Cardiac septum (tissue), 1 donor: ENCODE measurements at regions of chr17 and their contacts with region 1.

Region 1: GRCh38 chr17:44344939-44345453 is at the start of gene GRN:
- DNase-seq: peak; percentile 96
- total RNA-seq, gene GRN: 130 TPM

Region 2: DNA sequence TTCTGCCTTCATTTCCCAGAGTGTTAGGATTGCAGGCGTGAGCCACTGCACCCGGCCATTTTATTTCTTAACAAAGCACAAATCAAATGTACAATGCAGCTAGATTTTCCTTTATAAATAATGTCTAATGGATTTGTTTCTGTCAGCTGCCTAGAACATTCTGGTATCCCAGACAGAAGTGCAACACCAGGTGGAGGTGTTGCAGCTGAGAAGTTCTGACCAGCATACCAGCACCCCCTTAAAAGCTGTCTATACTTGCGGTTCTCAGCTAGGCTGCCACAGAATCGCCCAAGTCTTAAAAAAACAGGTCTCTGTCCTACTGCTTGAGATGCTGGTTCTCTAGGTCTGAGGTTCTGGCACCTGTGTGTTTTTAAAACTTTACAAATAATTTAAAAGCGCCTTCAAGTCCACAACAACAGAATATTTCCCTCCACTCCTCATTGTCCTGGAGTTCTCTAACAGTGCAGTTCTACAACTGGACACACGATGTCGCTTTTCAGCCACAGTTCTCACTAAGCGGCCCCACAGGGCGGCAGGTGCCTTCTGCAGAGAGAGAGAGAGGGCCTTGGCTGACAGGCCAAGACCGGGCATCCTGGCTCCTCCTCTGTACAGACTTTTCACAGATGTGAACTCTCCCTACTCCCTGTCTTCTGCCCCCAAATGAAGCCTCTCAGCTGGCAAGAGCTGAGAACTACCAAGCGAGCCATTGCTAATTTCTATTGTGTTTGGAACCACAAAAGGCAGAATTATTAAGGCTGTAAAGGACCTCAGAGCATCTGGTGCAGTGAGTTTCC is 650.7 kb before region 1 on chr17:
- intact Hi-C with region 1: no loop called
- DNase-seq: peak; percentile 83

Region 3: DNA sequence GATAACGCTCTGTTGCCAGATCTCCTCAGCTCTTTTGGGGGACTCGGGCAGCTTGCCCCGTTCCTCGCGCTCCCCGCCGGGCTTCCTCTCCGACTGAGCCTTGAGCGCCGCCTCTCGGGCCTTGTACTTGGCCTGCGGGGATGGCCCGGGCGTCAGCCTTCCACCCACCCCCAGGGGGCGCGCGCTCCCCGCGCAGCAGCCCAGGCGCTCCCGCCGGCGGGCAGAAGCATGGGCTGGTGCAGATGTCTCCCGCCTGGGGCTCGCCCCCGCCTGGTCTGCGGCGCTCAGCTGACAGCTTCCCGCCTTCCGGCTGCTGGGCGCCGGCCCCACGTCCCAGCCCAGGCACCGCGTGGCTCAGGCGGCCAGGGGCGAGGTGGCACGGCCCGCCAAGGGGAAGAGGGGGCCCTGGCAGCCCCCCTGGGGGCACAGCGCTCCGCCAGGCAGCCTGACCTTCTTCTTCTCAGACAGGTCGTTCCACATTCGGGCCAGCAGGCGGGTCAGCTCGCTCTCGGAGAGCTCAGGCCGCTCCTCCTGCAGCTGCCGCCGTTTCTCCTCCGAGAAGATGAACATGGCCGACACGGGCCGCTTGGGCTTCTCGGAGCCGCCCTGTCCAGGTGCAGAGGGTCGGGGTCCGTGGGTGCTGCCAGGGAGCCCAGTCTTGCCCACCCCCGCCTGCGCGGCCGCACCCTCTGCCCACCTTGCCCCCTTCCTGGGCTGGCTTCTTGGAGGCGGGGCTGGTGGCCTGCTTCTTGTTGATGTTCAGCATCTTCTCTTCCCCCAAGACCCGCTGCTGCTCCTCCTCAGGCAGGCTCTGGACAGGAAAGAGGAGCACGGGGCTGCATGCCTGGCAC is 134.4 kb before region 1 on chr17:
- intact Hi-C with region 1: loop called (anchors 5 kb)
- DNase-seq: peak; percentile 96

Region 4: DNA sequence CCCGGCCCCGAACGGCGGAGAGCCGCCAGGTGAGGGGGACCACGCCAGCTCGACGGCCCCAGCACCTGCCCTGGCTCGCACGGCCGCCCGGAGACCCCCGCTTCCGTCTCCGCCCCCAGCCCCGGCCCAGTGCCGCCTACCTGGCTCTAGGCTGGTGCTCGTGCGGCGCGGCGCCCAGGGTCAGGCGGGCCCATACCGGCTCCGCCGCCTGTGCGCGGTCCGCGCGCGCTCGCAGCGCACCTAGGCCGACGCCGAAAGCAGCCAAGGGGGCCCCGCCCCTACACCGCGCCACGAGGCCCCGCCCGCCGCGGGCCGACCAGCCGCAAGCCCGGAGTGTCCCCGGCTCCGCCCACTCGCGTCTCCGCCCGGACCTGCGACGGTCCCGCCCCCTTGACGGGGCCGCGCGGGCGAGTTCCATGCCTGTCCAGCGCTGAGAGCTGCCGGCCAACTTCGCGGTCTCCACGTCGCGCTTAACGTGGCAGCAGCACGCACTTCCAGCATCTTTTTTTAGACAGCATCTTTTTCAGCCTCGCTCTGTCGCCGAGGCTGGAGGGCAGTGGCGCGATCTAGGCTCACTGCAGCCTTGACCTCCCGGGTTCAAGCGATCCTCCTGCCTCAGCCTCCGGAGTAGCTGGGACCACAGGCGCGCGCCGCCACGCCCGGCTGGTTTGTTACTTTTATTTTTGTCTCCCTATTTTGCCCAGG is 20.3 kb before region 1 on chr17 and contains the start of gene SLC25A39:
- intact Hi-C with region 1: loop called (anchors 2 kb)
- DNase-seq: peak; percentile 99
- total RNA-seq, gene SLC25A39: 53.4 TPM